ENCODE measurements at regions of chr16 and their contacts with region 1.

Region 1: DNA sequence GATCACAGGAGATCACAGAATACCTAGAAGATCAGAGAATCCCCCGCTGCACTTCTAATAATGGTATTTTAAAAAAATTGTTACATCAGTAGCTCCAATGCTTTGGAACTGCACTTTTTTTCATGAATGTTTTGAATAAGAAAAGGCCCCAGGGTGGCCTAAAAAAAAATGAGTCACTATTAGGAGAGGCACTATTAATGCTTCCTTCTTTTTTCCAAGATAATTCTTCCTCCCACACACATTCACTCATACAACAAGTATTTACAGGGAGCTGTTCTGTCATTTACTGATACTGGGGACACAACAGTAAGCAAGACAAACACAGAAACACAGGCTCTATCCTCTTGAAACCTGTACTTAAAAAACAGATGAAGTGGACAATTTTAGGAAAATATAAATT is 675 bp upstream of the PDZD9 start:
- DNase-seq: peak in 1 of 2 donors; percentile 14
- ATAC-seq: no peak
- H3K4me3 ChIP-seq: no peak overlapping the region
- H3K4me3 Mint-ChIP-seq: no peak overlapping the region
- H3K27ac ChIP-seq: no peak overlapping the region
- H3K27ac Mint-ChIP-seq: no peak overlapping the region
- H3K4me1 ChIP-seq: peaks cover 7% of the 10 kb centered on the region
- H3K4me1 Mint-ChIP-seq: peaks cover 10% of the 10 kb centered on the region in 2 donors
- H3K27me3 ChIP-seq: no peaks in the 10 kb centered on the region
- H3K27me3 Mint-ChIP-seq: peaks cover 0 to 9% of the 10 kb centered on the region in 2 donors
- CTCF ChIP-seq: no peak

Region 2: GRCh38 chr16:22077700-22078313 is 76.2 kb after region 1 on chr16:
- intact Hi-C with region 1: loop called (anchors 1 kb)
- DNase-seq: peak; percentile 56 to 82
- ATAC-seq: peak; percentile 53 to 78 (median 77)
- H3K4me3 ChIP-seq: no peak overlapping the region
- H3K4me3 Mint-ChIP-seq: no peak overlapping the region
- H3K27ac ChIP-seq: no peak overlapping the region
- H3K27ac Mint-ChIP-seq: no peak overlapping the region
- H3K4me1 ChIP-seq: no peaks in the 10 kb centered on the region
- H3K4me1 Mint-ChIP-seq: no peaks in the 10 kb centered on the region
- H3K27me3 ChIP-seq: no peaks in the 10 kb centered on the region
- H3K27me3 Mint-ChIP-seq: no peaks in the 10 kb centered on the region
- CTCF ChIP-seq: peak; percentile 82

Region 3: GRCh38 chr16:22091758-22092600 is 90.4 kb after region 1 on chr16 and contains the start of gene VWA3A:
- intact Hi-C with region 1: no loop called
- DNase-seq: no peak
- ATAC-seq: no peak
- H3K4me3 ChIP-seq: no peak within 1 kb of the TSS
- H3K4me3 Mint-ChIP-seq: no peak within 1 kb of the TSS
- H3K27ac ChIP-seq: no peak within 1 kb of the TSS
- H3K27ac Mint-ChIP-seq: no peak within 1 kb of the TSS
- H3K4me1 ChIP-seq: no peaks in the 10 kb centered on the region
- H3K4me1 Mint-ChIP-seq: no peaks in the 10 kb centered on the region
- H3K27me3 ChIP-seq: no peaks in the 10 kb centered on the region
- H3K27me3 Mint-ChIP-seq: peaks cover 4 to 7% of the 10 kb centered on the region in 2 donors
- CTCF ChIP-seq: no peak
- total RNA-seq, gene VWA3A: 0.28 to 0.39 (median 0.35) TPM

Region 4: GRCh38 chr16:22151246-22151998 is 149.8 kb after region 1 on chr16:
- intact Hi-C with region 1: no loop called
- DNase-seq: no peak
- ATAC-seq: no peak
- H3K4me3 ChIP-seq: no peak overlapping the region
- H3K4me3 Mint-ChIP-seq: no peak overlapping the region
- H3K27ac ChIP-seq: no peak overlapping the region
- H3K27ac Mint-ChIP-seq: no peak overlapping the region
- H3K4me1 ChIP-seq: no peaks in the 10 kb centered on the region
- H3K4me1 Mint-ChIP-seq: no peaks in the 10 kb centered on the region
- H3K27me3 ChIP-seq: no peaks in the 10 kb centered on the region
- H3K27me3 Mint-ChIP-seq: peaks cover 0 to 3% of the 10 kb centered on the region in 2 donors
- CTCF ChIP-seq: no peak